Left lung (tissue), 14 donors: ENCODE measurements at regions of chr10 and their contacts with region 1.

Region 1: GRCh38 chr10:15725603-15726002 is 5.9 kb upstream of the ITGA8 start:
- DNase-seq: peak in 1 of 4 donors; percentile 71
- ATAC-seq: peak; percentile 81
- H3K4me3 ChIP-seq: no peak overlapping the region
- H3K27ac ChIP-seq: no peak overlapping the region
- H3K4me1 ChIP-seq: no peaks in the 10 kb centered on the region
- H3K27me3 ChIP-seq: peaks cover 0 to 21% of the 10 kb centered on the region in 2 donors
- CTCF ChIP-seq: peak; percentile 16 to 35

Region 2: GRCh38 chr10:15585303-15585715 is 140.3 kb before region 1 on chr10:
- intact Hi-C with region 1: loop called in 1 of 2 experiments (anchors 10 kb)
- DNase-seq: peak in 3 of 4 donors; percentile 35 to 71 (median 36)
- ATAC-seq: peak; percentile 86
- H3K4me3 ChIP-seq: no peak overlapping the region
- H3K27ac ChIP-seq: no peak overlapping the region
- H3K4me1 ChIP-seq: no peaks in the 10 kb centered on the region
- H3K27me3 ChIP-seq: no peaks in the 10 kb centered on the region
- CTCF ChIP-seq: peak; percentile 53 to 58